Heart right ventricle (tissue), 16 donors: ENCODE measurements at regions of chr16 and their contacts with region 1.

Region 1: GRCh38 chr16:56191156-56191815 is at the start of gene GNAO1:
- DNase-seq: peak; percentile 72 to 82
- ATAC-seq: peak; percentile 72 to 91 (median 86)
- H3K4me3 ChIP-seq: peak within 1 kb of the TSS; percentile 58 to 84 (median 72)
- H3K27ac ChIP-seq: peak within 1 kb of the TSS; percentile 21 to 96 (median 90)
- H3K4me1 ChIP-seq: peaks cover 0 to 50% (median 27%) of the 10 kb centered on the region in 9 donors
- H3K27me3 ChIP-seq: peaks cover 0 to 81% (median 20%) of the 10 kb centered on the region in 7 donors
- CTCF ChIP-seq: no peak
- total RNA-seq, gene GNAO1: 6.4 to 36.7 (median 14.4) TPM

Region 2: GRCh38 chr16:55944377-55944802 is 246.9 kb before region 1 on chr16:
- intact Hi-C with region 1: loop called in 4 of 10 experiments (anchors 10 kb)
- DNase-seq: peak; percentile 59 to 72
- ATAC-seq: peak; percentile 84 to 93 (median 92)
- H3K4me3 ChIP-seq: no peak overlapping the region
- H3K27ac ChIP-seq: peak overlapping the region in 1 of 10 donors; percentile 33
- H3K4me1 ChIP-seq: peaks cover 0 to 11% (median 0%) of the 10 kb centered on the region in 9 donors
- H3K27me3 ChIP-seq: peaks cover 0 to 8% (median 3%) of the 10 kb centered on the region in 7 donors
- CTCF ChIP-seq: peak; percentile 79 to 95 (median 92)

Region 3: DNA sequence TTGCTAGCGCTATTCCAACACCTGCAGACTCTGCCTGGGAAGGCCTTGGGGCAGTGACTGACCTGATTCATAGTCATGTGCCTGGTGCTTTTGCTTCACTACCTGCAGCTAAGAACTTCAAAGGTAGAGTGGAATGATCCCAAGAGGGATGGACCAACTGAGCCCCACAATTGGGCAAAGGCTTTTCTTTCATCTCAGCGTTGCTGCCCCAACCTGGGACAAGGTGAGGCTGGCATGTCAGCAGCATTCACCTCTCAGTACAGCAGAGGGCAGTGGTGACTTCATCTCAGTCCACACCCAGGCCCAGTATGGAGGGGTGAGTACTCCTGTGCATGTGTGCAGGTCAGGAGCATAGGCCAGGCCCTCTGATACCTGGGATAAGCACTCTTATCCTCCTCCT is 149.6 kb before region 1 on chr16:
- intact Hi-C with region 1: loop called in 6 of 10 experiments (anchors 5 to 10 kb)
- DNase-seq: peak in 1 of 2 donors; percentile 15
- ATAC-seq: peak; percentile 51 to 93 (median 86)
- H3K4me3 ChIP-seq: no peak overlapping the region
- H3K27ac ChIP-seq: no peak overlapping the region
- H3K4me1 ChIP-seq: no peaks in the 10 kb centered on the region
- H3K27me3 ChIP-seq: no peaks in the 10 kb centered on the region
- CTCF ChIP-seq: peak in 8 of 9 donors; percentile 27 to 65 (median 50)

Region 4: GRCh38 chr16:56102183-56102686 is 89.1 kb before region 1 on chr16:
- intact Hi-C with region 1: loop called in 1 of 10 experiments (anchors 10 kb)
- DNase-seq: peak; percentile 65 to 66
- ATAC-seq: peak; percentile 80 to 93 (median 90)
- H3K4me3 ChIP-seq: peak overlapping the region in 8 of 10 donors; percentile 23 to 51 (median 40)
- H3K27ac ChIP-seq: peak overlapping the region in 9 of 10 donors; percentile 59 to 81 (median 75)
- H3K4me1 ChIP-seq: peaks cover 3 to 17% (median 5%) of the 10 kb centered on the region in 9 donors
- H3K27me3 ChIP-seq: no peaks in the 10 kb centered on the region
- CTCF ChIP-seq: no peak

Region 5: DNA sequence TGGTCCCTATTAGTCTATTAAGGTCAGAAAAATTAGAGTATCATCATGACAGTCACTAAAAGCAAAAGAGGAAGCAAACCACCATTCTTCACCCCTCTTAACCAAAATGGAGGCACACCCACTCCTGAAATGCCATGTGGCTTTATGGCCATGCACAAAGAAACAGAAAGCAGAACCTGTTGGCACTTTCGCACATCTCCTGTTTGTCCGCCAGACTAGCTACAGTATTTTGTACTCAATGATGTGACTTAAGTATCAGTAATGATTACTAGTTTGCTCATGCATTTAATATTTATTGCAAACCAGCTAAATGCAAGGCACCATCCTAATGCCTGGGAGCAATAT is 70.2 kb before region 1 on chr16:
- intact Hi-C with region 1: no loop called
- DNase-seq: no peak
- ATAC-seq: no peak
- H3K4me3 ChIP-seq: no peak overlapping the region
- H3K27ac ChIP-seq: no peak overlapping the region
- H3K4me1 ChIP-seq: peaks cover 0 to 8% (median 0%) of the 10 kb centered on the region in 9 donors
- H3K27me3 ChIP-seq: no peaks in the 10 kb centered on the region
- CTCF ChIP-seq: no peak

Region 6: GRCh38 chr16:56257239-56257638 is 66.0 kb after region 1 on chr16:
- intact Hi-C with region 1: loop called in 3 of 10 experiments (anchors 5 kb)
- DNase-seq: peak; percentile 63 to 70
- ATAC-seq: peak; percentile 13 to 59 (median 32)
- H3K4me3 ChIP-seq: peak overlapping the region in 1 of 10 donors; percentile 8
- H3K27ac ChIP-seq: peak overlapping the region in 6 of 10 donors; percentile 14 to 70 (median 46)
- H3K4me1 ChIP-seq: peaks cover 18 to 64% (median 43%) of the 10 kb centered on the region in 9 donors
- H3K27me3 ChIP-seq: no peaks in the 10 kb centered on the region
- CTCF ChIP-seq: no peak

Region 7: DNA sequence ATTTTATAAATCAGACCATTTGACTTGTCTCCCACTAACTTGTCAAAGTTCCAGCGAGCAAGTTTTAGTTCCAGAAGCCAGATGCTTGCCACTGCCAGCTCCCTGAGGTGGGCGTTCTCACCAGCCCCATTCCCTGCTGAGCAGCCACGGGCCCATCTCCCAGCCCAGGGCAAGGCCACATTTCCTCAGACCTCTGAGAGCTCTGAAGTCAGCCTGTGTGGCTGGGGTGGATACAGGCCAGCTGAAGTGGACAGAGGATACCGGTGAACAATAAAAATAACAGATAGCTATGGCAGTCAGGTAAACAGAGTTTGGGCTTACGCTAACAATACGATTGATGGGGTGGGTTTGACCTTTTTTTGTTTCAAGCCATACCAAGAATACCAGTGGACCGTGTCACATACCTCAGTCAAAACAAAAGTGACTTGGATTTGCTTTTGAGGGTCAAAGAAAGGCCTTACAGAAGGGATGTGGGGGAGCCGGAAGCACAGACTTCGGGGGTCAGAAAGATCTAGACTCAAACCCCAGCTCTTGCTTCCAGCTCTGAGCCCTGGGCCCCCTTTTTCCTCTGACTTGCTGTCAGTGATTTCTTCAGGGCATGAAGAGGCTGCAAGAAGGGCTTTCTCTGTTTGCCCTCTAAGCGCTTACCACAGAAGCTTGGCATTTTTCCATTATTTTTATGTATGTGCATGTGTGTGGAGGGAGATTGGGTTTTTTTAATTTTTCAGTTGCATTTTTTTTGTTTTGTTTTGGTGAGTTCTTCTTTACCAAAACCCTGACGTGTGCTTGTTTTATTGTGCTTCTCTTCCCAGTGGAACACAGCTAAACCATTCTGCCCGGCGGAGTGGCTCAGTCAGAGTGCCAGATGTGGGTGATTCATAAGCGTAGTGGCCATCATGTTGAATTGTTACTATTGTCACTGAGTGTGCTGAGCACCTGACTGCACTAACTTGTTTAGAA is 109.9 kb after region 1 on chr16:
- intact Hi-C with region 1: loop called in 2 of 10 experiments (anchors 5 to 10 kb)
- DNase-seq: no peak
- ATAC-seq: no peak
- H3K4me3 ChIP-seq: no peak overlapping the region
- H3K27ac ChIP-seq: no peak overlapping the region
- H3K4me1 ChIP-seq: peaks cover 4 to 27% (median 15%) of the 10 kb centered on the region in 9 donors
- H3K27me3 ChIP-seq: no peaks in the 10 kb centered on the region
- CTCF ChIP-seq: no peak

Region 8: GRCh38 chr16:56317998-56318826 is 126.9 kb after region 1 on chr16:
- intact Hi-C with region 1: loop called in 7 of 10 experiments (anchors 5 to 10 kb)
- DNase-seq: peak; percentile 80 to 85
- ATAC-seq: peak; percentile 95 to 98 (median 96)
- H3K4me3 ChIP-seq: peak overlapping the region in 8 of 10 donors; percentile 12 to 41 (median 37)
- H3K27ac ChIP-seq: peak overlapping the region in 1 of 10 donors; percentile 37
- H3K4me1 ChIP-seq: peaks cover 0 to 12% (median 8%) of the 10 kb centered on the region in 9 donors
- H3K27me3 ChIP-seq: peaks cover 0 to 6% (median 0%) of the 10 kb centered on the region in 7 donors
- CTCF ChIP-seq: peak; percentile 86 to 97 (median 94)